ENCODE measurements at regions of chr20 and their contacts with region 1.

Region 1: DNA sequence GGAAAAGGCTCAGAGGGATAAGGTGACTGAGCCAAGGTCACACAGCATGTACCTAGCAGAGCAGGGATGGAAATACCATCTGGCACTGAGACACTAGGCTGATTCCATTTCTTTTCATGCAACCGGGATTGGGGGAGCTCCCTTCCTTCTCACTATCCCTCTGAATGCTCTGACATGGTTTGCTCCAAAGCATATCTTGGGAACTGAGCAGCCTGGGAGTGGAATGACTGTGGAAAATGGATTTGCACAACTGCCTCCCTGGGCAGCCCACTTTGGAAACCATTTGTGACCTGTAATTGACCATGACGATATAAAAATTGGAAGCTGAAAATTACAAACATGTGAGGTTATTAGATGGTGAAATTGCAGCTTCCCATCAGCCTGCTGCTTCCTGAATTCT is 309.0 kb upstream of the CHD6 start:
- DNase-seq: no peak
- ATAC-seq: no peak
- H3K4me3 ChIP-seq: no peak overlapping the region
- H3K27ac ChIP-seq: no peak overlapping the region
- H3K4me1 ChIP-seq: no peaks in the 10 kb centered on the region
- H3K27me3 ChIP-seq: 0 out of 4 replicates have a peak, but pooled peaks cover 0 to 3% of the 10 kb centered on the region in 2 experiments
- CTCF ChIP-seq: no peak
- EP300 ChIP-seq: no peak
- POLR2A ChIP-seq: no peak
- RAD21 ChIP-seq: no peak

Region 2: GRCh38 chr20:41910558-41910957 is 16.6 kb before region 1 on chr20:
- CTCF ChIA-PET with region 1: interaction called, 13 read pairs
- POLR2A ChIA-PET with region 1: no interaction called
- RAD21 ChIA-PET with region 1: no interaction called
- SMC1A ChIA-PET with region 1: no interaction called
- in situ Hi-C with region 1: no loop called
- intact Hi-C with region 1: no loop called
- DNase-seq: no peak
- ATAC-seq: no peak
- H3K4me3 ChIP-seq: no peak overlapping the region
- H3K27ac ChIP-seq: no peak overlapping the region
- H3K4me1 ChIP-seq: no peaks in the 10 kb centered on the region
- H3K27me3 ChIP-seq: no peaks in the 10 kb centered on the region
- CTCF ChIP-seq: no peak
- EP300 ChIP-seq: no peak
- POLR2A ChIP-seq: no peak
- RAD21 ChIP-seq: no peak